ENCODE measurements at regions of chr2 and their contacts with region 1.

Region 1: DNA sequence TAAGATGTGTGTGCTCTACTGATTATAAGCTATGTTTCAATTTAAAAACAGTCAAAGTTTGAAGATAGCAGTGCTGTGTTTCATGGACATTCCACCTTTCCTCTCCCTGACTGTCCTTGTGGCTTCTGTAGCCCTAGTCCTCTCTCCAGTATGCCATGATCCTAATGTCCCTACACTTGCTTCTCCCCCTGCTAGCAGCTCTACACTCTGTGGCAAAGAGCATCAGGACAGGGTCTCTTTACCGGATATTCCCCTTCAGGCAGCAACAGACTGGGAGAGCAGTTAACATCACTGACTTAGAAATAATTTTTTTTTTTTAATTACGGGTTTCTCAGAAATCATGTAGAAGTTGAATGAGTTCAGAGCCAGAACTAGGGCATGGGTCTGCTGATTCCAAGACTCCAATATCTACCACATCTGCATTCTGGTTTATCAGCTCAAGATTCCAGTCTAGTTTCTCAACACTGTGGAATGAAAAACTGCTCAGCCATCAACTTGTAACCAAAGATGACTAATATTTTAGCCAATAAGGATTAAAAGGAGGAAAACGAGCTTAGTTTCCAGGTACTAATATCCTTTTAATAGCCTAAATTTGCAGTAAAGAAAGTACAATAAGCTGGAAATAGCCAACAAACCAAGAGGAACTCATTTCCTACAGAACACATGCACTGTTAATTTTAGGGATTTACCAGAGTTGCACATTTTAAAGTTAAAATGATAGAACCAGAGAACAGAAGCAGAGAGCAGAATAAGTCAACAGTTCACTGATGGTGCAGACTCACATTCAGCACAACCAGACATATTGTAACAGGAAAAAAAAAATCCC is 45.2 kb downstream of the TMEM131 start:
- DNase-seq: no peak
- ATAC-seq: peak; percentile 88
- H3K4me3 ChIP-seq: no peak overlapping the region
- H3K27ac ChIP-seq: peak overlapping the region; percentile 73
- H3K4me1 ChIP-seq: peaks cover 20% of the 10 kb centered on the region
- H3K27me3 ChIP-seq: no peaks in the 10 kb centered on the region
- CTCF ChIP-seq: no peak

Region 2: DNA sequence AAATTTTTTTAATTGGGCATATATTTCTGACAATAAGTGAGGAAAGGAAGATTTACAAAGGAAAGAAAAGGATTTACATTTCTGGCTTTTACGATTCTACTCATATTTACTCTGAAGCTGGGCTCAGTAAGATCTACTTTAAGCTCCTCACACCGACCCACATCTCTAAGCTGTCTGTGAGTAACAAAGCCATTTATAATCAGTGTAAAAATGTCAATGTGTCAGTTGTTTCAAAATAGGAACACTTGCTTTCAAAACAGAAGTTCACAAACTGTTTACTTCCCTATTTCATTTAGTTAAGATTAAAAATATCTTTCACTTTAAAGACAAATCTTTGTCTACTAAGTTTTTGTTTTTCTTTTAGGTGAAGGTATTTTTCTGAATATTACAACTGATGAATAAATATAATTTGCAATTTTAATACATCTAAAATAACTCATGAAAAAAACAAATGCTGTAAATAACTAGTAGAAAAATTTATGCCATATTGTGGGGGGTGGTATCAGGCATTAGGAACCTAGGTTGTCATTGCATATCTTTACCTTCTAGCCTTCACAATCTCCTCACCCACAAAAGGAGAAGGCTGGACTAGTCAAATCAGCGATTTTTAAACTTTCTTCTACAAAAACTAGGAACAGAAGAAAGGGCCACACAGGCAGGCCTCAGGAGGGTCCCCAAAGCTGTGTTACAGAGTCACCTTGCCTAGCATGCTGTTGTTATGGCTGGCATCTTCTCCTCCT is 19.3 kb before region 1 on chr2:
- CTCF ChIA-PET with region 1: no interaction called
- POLR2A ChIA-PET with region 1: interaction called, 13 read pairs
- in situ Hi-C with region 1: no loop called
- intact Hi-C with region 1: no loop called
- DNase-seq: no peak
- ATAC-seq: no peak
- H3K4me3 ChIP-seq: no peak overlapping the region
- H3K27ac ChIP-seq: no peak overlapping the region
- H3K4me1 ChIP-seq: peaks cover 18% of the 10 kb centered on the region
- H3K27me3 ChIP-seq: no peaks in the 10 kb centered on the region
- CTCF ChIP-seq: no peak

Region 3: DNA sequence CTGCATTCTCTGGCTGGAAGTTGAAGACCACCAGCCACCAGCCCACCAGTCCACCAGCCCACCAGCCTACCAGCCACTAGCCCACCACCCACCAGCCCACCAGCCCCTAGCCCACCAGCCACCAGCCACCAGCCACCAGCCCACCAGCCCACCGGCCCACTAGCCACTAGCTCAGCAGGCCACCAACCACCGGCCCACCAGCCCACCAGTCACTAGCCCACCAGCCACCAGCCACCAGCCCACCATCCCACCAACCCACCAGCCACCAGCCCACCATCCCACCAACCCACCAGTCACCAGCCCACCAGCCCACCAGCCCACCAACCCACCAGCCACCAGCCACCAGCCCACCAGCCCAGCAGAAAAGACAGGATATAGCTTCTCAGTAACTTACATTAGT is 63.8 kb after region 1 on chr2:
- CTCF ChIA-PET with region 1: no interaction called
- POLR2A ChIA-PET with region 1: interaction called, 26 read pairs
- in situ Hi-C with region 1: no loop called
- intact Hi-C with region 1: no loop called
- DNase-seq: no peak
- ATAC-seq: no peak
- H3K4me3 ChIP-seq: no peak overlapping the region
- H3K27ac ChIP-seq: no peak overlapping the region
- H3K4me1 ChIP-seq: no peaks in the 10 kb centered on the region
- H3K27me3 ChIP-seq: no peaks in the 10 kb centered on the region
- CTCF ChIP-seq: no peak

Measured in Panc1 (cell line).